ENCODE measurements at regions of chr7 and their contacts with region 1.

Region 1: DNA sequence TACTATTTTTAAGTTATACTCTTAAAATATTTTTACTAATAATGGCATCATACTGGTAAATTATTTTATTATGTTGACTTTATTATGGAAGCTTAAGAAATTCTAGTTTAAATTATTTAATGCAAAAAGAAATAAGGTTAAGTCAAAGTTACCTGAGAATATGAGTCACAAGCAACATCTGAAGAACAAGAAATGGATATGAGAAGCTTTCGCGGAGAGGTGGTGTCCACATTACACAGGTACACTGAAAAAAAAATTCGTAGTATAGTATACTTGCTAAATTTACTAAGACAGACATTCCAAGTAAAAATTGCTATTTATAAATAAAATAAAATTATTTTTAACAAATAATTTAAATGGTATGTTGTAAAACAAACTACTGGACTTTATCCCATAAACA is 143.8 kb downstream of the AVL9 start:
- DNase-seq: no peak
- H3K4me3 Mint-ChIP-seq: no peak overlapping the region
- H3K27ac Mint-ChIP-seq: no peak overlapping the region
- H3K4me1 Mint-ChIP-seq: peaks cover 6% of the 10 kb centered on the region
- H3K27me3 Mint-ChIP-seq: peaks cover 13% of the 10 kb centered on the region

Region 2: DNA sequence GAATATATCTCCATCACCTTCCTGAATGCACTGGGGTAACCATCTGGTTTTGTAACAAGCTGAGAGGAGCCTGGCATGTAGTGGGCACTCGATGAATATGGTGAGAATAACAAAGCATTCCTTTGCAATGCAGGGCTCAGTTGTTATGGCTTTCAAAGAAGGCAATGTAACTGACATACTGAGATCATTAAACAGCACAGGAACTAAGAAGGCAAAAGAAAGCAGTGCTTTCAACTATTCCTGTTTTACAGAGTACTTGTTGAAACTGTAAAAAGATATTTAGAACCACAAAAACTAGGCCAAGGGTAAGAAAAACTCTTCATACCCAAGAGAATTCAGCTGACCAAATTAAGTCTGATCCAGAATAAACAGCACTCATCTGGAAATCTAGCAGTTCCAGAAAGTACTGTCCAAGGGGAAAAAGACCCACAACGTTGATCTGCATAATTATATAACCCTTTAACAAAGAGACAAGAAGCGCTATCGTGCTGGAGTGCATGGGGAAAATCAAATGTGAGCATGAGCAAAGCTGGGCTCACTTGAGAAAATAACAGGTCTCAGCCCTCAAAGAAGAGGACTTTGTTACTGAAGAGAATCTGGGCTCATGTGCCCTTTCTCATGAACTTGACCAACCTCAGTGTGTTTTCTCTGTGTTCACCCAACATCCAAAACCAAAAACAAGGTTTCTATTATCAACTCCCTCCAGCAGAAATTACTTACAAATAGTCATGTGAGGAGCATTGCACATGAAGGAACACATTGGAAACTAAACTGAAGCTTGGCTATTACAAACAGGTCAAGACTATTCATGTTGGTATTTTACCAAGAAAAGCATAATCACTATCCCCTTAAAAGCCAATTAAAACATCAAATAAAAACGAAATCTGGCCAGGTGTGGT is 27.7 kb before region 1 on chr7:
- intact Hi-C with region 1: loop called (anchors 1 kb)
- DNase-seq: no peak
- H3K4me3 Mint-ChIP-seq: no peak overlapping the region
- H3K27ac Mint-ChIP-seq: no peak overlapping the region
- H3K4me1 Mint-ChIP-seq: no peaks in the 10 kb centered on the region
- H3K27me3 Mint-ChIP-seq: no peaks in the 10 kb centered on the region

Region 3: DNA sequence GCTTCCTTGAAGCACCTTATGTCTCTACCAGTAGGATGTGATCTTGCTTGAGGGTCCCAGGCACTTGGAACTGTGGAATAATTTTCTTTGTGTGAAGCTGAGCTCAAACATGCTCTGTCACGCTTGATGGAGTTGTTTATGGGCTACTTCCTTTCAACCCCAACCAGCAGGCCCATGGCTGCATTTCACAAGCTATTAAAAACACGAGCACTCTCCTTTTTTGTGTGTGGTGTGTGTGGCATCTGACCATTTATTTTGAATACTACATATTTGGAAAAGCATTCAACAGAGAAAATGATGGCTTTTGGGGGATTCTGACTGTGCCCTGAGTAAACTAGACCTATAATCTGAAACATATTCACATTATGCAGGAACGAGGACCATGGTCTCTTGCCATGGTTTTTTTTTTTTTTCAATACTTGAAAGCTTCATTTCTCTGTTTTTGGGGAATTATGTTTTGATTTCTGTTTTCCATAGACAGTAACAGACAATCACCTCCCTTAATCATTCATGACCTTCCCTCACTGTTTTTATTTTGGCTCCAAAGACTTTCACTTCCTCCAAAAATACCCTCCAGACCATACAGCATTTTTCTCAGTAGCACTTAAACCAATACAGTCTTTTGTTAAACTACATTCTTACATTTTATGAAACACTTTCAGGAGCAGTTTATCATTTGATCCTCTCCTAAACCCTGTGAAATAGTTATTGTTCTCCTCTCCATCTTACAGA is 1032.6 kb after region 1 on chr7:
- intact Hi-C with region 1: no loop called
- DNase-seq: no peak
- H3K4me3 Mint-ChIP-seq: no peak overlapping the region
- H3K27ac Mint-ChIP-seq: no peak overlapping the region
- H3K4me1 Mint-ChIP-seq: no peaks in the 10 kb centered on the region
- H3K27me3 Mint-ChIP-seq: no peaks in the 10 kb centered on the region